A549 (cell line): ENCODE measurements at regions of chr5 and their contacts with region 1.

Region 1: DNA sequence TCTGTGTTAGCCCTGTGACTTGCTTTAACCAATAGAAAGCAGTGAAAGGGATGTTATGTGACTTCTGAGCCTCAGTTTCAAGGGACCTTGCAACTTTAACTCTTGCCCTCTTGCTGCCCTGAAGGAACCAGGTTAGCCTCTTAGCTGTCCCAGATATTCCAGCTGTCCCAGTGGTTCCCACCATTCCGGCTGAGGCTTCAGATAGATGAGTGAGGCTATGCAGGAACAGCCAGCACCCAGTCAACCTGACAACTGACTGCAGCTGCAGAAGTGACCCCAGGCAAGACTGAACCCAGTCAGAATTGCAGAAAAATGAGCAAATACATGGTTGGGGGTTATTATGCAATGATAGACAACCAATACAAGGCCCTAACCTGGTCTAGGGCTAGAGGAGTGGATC is 10.4 kb upstream of the CDC23 start:
- DNase-seq: no peak
- ATAC-seq: peak; percentile 19 to 61; a peak in 5 of 6 replicates
- H3K4me3 ChIP-seq: no peak overlapping the region
- H3K27ac ChIP-seq: no peak overlapping the region
- H3K4me1 ChIP-seq: no peaks in the 10 kb centered on the region
- CTCF ChIP-seq: no peak
- EP300 ChIP-seq: no peak
- POLR2A ChIP-seq: no peak
- RAD21 ChIP-seq: no peak

Region 2: GRCh38 chr5:137142764-137143605 is 1080.5 kb before region 1 on chr5:
- CTCF ChIA-PET with region 1: no interaction called
- POLR2A ChIA-PET with region 1: no interaction called
- DNase-seq: no peak
- ATAC-seq: peak in 1 of 2 experiments; percentile 35; a peak in 2 of 6 replicates
- H3K4me3 ChIP-seq: no peak overlapping the region
- H3K27ac ChIP-seq: no peak overlapping the region
- H3K4me1 ChIP-seq: peaks cover 3% of the 10 kb centered on the region; the same call in 1 of the 3 replicates
- CTCF ChIP-seq: no peak
- EP300 ChIP-seq: no peak
- POLR2A ChIP-seq: no peak
- RAD21 ChIP-seq: no peak

Region 3: GRCh38 chr5:138213161-138214029 is 10.1 kb before region 1 on chr5 and contains the start of gene CDC23:
- CTCF ChIA-PET with region 1: interaction called, 18 read pairs
- POLR2A ChIA-PET with region 1: interaction called, 4 read pairs
- DNase-seq: peak; percentile 99 to 100
- ATAC-seq: peak; percentile 98 to 99
- H3K4me3 ChIP-seq: peak within 1 kb of the TSS; percentile 85
- H3K27ac ChIP-seq: peak within 1 kb of the TSS; percentile 80 to 91
- H3K4me1 ChIP-seq: peaks cover 6% of the 10 kb centered on the region; the same call in 2 of the 3 replicates
- CTCF ChIP-seq: no peak
- EP300 ChIP-seq: no peak
- POLR2A ChIP-seq: peak; percentile 60
- RAD21 ChIP-seq: no peak
- polyA plus RNA-seq, gene CDC23: 61.7 and 70.3 TPM in 2 replicates

Region 4: GRCh38 chr5:138241688-138242571 is 18.4 kb after region 1 on chr5:
- CTCF ChIA-PET with region 1: interaction called, 32 read pairs
- POLR2A ChIA-PET with region 1: no interaction called
- DNase-seq: no peak
- ATAC-seq: peak; percentile 61 to 86
- H3K4me3 ChIP-seq: peak overlapping the region; percentile 39
- H3K27ac ChIP-seq: peak overlapping the region; percentile 21 to 77; a peak in 4 of 6 replicates
- H3K4me1 ChIP-seq: no peaks in the 10 kb centered on the region
- CTCF ChIP-seq: no peak
- EP300 ChIP-seq: no peak
- POLR2A ChIP-seq: no peak
- RAD21 ChIP-seq: no peak

Region 5: GRCh38 chr5:138408023-138408422 is 184.5 kb after region 1 on chr5:
- CTCF ChIA-PET with region 1: interaction called, 14 read pairs
- POLR2A ChIA-PET with region 1: no interaction called
- DNase-seq: no peak
- ATAC-seq: no peak
- H3K4me3 ChIP-seq: no peak overlapping the region
- H3K27ac ChIP-seq: no peak overlapping the region
- H3K4me1 ChIP-seq: no peaks in the 10 kb centered on the region
- CTCF ChIP-seq: no peak
- EP300 ChIP-seq: no peak
- POLR2A ChIP-seq: no peak
- RAD21 ChIP-seq: no peak